ENCODE measurements at regions of chr15 and their contacts with region 1.

Region 1: DNA sequence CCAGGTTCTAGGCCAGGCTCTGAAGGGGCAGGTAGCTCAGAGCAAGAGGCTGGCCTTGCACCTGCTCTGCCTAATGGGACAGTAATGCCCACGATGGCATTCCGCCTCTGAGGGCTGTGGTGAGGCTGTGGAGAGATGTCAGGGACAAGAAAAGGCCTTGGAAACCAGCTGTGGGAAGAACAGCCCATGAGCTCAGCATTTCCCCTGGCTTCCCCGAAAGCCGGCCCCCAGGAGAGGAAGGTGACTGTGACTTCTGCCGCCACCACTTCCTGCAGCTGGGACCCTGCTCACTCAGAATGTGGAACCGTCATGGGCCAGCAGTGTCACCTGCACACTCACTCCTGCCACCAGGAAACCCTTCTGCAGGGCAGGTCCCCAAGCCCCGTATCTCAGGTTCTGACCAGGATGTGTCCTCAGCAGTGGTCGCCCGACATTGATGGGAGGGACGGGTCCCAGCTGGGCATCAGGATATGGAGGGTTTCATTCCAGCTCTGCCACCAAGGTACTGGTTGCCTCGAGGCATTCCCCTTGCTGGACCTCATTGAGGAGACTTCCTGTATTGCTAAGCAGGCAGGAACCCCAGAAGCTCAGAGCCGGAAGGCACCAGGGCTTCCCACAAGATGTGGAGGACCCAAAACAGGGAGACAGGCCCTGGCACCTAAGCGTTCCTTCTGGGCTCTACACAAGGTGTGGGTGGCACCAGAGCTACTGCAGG is 30.7 kb downstream of the SEMA7A start:
- DNase-seq: peak; percentile 82
- ATAC-seq: peak; percentile 75
- H3K4me3 Mint-ChIP-seq: peak overlapping the region; percentile 42
- H3K27ac Mint-ChIP-seq: peak overlapping the region; percentile 87
- H3K4me1 Mint-ChIP-seq: peaks cover 66% of the 10 kb centered on the region
- H3K27me3 Mint-ChIP-seq: no peaks in the 10 kb centered on the region

Region 2: GRCh38 chr15:74433592-74434262 is 30.7 kb after region 1 on chr15 and contains the start of gene SEMA7A:
- POLR2A ChIA-PET with region 1: interaction called, 102 read pairs
- DNase-seq: peak; percentile 89
- ATAC-seq: peak; percentile 88
- H3K4me3 Mint-ChIP-seq: peak within 1 kb of the TSS; percentile 87
- H3K27ac Mint-ChIP-seq: peak within 1 kb of the TSS; percentile 89
- H3K4me1 Mint-ChIP-seq: peaks cover 60% of the 10 kb centered on the region
- H3K27me3 Mint-ChIP-seq: no peaks in the 10 kb centered on the region
- total RNA-seq, gene SEMA7A: 15.2 to 15.8 TPM

Region 3: GRCh38 chr15:74531144-74531811 is 128.2 kb after region 1 on chr15:
- POLR2A ChIA-PET with region 1: no interaction called
- DNase-seq: no peak
- ATAC-seq: no peak
- H3K4me3 Mint-ChIP-seq: no peak overlapping the region
- H3K27ac Mint-ChIP-seq: no peak overlapping the region
- H3K4me1 Mint-ChIP-seq: peaks cover 21% of the 10 kb centered on the region
- H3K27me3 Mint-ChIP-seq: no peaks in the 10 kb centered on the region

Measured in activated naive CD8-positive, alpha-beta T cell treated with anti-CD3 and anti-CD28 coated beads, Interleukin-2, amount 10 ng/mL, durations not matched to agents 7 days and 5 days (primary cell).